ENCODE measurements at regions of chr11 and their contacts with region 1.

Region 1: GRCh38 chr11:107778839-107779517 is 67.1 kb upstream of the SLN start:
- DNase-seq: no peak
- ATAC-seq: no peak
- H3K4me3 ChIP-seq: no peak overlapping the region
- H3K27ac ChIP-seq: no peak overlapping the region
- H3K4me1 ChIP-seq: no peaks in the 10 kb centered on the region
- H3K27me3 ChIP-seq: peaks cover 0 to 4% (median 0%) of the 10 kb centered on the region in 7 donors
- CTCF ChIP-seq: no peak

Region 2: GRCh38 chr11:107583629-107584195 is 195.3 kb before region 1 on chr11:
- intact Hi-C with region 1: loop called in 7 of 10 experiments (anchors 2 to 10 kb)
- DNase-seq: no peak
- ATAC-seq: no peak
- H3K4me3 ChIP-seq: no peak overlapping the region
- H3K27ac ChIP-seq: no peak overlapping the region
- H3K4me1 ChIP-seq: no peaks in the 10 kb centered on the region
- H3K27me3 ChIP-seq: peaks cover 0 to 47% (median 29%) of the 10 kb centered on the region in 7 donors
- CTCF ChIP-seq: no peak

Region 3: GRCh38 chr11:107791343-107792048 is 12.5 kb after region 1 on chr11:
- intact Hi-C with region 1: no loop called
- DNase-seq: no peak
- ATAC-seq: no peak
- H3K4me3 ChIP-seq: no peak overlapping the region
- H3K27ac ChIP-seq: no peak overlapping the region
- H3K4me1 ChIP-seq: no peaks in the 10 kb centered on the region
- H3K27me3 ChIP-seq: no peaks in the 10 kb centered on the region
- CTCF ChIP-seq: no peak

Region 4: DNA sequence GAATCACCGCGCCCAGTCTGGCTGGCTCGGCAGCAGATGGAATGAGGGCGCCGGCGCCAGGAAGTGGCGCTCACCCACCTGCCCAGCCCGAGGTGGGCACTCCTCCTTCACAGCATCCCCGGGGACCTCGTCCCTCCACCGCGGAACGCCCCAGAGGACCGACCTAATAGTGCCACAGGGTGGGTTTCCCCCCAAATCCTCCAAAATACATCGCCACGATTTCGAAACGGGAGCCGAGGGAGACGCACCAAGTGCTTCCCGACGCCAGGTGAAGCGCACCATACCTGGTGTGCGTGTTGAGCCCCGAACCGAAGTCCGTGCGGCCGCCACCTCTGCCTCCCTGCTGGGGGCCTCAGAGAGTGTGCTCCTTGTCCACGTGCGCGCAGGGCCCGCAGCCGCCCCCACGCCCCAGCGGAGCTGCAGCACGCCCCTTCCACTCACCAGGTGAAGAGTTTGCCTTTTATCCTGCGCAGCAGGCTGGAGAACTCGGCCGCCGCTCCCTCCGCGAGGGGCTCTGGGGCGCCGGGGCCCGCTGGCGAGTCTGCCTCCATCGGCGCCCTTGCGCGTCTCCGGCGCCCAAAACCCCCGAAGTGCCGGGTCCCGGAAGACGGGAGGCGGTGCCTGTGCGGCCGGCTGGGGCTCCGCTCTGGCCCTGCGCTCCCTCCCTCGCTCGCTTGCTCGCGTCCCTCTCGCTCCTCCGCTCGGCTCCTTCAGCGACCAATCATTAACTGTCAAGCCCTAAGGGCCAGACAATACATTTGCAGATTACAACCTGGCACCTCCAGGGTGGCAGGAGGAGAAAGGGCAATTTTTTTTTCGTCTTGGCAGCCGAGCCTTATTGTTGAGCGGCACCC is 79.5 kb after region 1 on chr11 and contains the start of gene SLC35F2:
- intact Hi-C with region 1: no loop called
- DNase-seq: peak; percentile 29 to 60
- ATAC-seq: peak; percentile 81 to 93 (median 87)
- H3K4me3 ChIP-seq: peak within 1 kb of the TSS; percentile 34 to 73 (median 66)
- H3K27ac ChIP-seq: peak within 1 kb of the TSS in 5 of 10 donors; percentile 51 to 62 (median 53)
- H3K4me1 ChIP-seq: peaks cover 0 to 29% (median 16%) of the 10 kb centered on the region in 9 donors
- H3K27me3 ChIP-seq: peaks cover 0 to 19% (median 0%) of the 10 kb centered on the region in 7 donors
- CTCF ChIP-seq: no peak
- total RNA-seq, gene SLC35F2: 0.40 to 2.0 (median 0.86) TPM